Gastrocnemius medialis (tissue), 4 donors: ENCODE measurements at regions of chr14 and their contacts with region 1.

Region 1: GRCh38 chr14:69107407-69108003 is 45.4 kb downstream of the DCAF5 start:
- DNase-seq: no peak
- ATAC-seq: peak; percentile 63 to 71
- H3K4me3 ChIP-seq: no peak overlapping the region
- H3K27ac ChIP-seq: no peak overlapping the region
- H3K4me1 ChIP-seq: peaks cover 3 to 7% of the 10 kb centered on the region in 2 donors
- H3K27me3 ChIP-seq: no peaks in the 10 kb centered on the region
- CTCF ChIP-seq: peak; percentile 50 to 69 (median 65)
- POLR2A ChIP-seq: no peak

Region 2: DNA sequence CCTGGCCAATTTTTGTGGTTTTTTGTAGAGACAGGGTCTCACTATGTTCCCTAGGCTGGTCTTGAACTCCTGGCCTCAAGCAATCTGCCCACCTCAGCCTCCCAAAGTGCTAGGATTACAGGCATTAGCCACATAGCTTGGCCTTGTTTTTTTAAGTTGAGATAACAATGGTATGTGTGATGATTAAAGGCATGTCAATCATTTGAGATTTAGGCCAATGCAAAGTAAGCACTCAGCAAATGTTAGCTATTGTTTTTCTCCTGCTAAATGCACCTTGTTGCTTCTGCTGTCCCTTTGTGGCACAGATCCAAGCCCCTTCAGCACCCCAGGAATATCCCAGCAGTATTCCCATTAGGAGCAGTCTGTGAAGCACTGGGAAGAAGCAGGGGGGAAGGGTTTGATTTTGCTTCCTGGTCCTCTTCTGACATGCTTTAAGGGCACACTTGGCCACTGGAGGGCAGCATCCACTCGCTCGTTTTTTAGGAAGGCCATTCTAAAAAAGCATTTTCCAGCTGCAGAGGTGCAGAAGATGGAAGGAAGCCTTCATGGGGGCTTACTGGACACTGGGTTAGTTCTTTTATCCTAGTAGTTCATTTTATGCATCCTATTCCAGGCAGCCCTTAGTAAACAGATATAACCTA is 244.4 kb before region 1 on chr14:
- in situ Hi-C with region 1: no loop called
- intact Hi-C with region 1: loop called (anchors 5 kb)
- DNase-seq: peak; percentile 38 to 44
- ATAC-seq: peak; percentile 63 to 70
- H3K4me3 ChIP-seq: no peak overlapping the region
- H3K27ac ChIP-seq: no peak overlapping the region
- H3K4me1 ChIP-seq: no peaks in the 10 kb centered on the region
- H3K27me3 ChIP-seq: no peaks in the 10 kb centered on the region
- CTCF ChIP-seq: peak; percentile 42 to 79 (median 64)
- POLR2A ChIP-seq: no peak

Region 3: GRCh38 chr14:69068744-69069421 is 38.6 kb before region 1 on chr14:
- in situ Hi-C with region 1: no loop called
- intact Hi-C with region 1: no loop called
- DNase-seq: no peak
- ATAC-seq: no peak
- H3K4me3 ChIP-seq: no peak overlapping the region
- H3K27ac ChIP-seq: no peak overlapping the region
- H3K4me1 ChIP-seq: no peaks in the 10 kb centered on the region
- H3K27me3 ChIP-seq: no peaks in the 10 kb centered on the region
- CTCF ChIP-seq: no peak
- POLR2A ChIP-seq: no peak

Region 4: DNA sequence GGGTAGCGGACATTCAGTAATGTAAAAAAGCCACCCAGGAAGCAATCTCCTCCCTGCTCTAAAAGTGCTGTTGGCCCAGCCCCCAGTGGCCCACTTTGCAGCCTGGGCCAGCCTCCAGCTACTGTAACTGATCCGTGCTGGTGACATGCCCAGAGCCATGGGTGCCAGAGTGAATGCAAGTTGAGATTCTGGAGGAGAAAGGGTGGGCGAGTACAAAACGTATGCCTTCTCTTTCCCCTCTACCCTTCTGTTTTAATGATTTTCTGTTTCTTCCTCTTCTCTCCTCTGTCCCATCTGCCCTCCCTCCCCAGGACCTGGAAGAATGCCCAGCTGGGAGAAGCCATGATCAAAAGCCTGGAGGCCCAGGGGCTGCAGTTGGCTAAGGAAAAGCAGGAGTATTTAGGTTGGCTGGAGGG is 393.9 kb after region 1 on chr14:
- in situ Hi-C with region 1: no loop called
- intact Hi-C with region 1: no loop called
- DNase-seq: peak; percentile 57 to 79
- ATAC-seq: peak; percentile 96
- H3K4me3 ChIP-seq: no peak overlapping the region
- H3K27ac ChIP-seq: peak overlapping the region; percentile 18 to 62 (median 32)
- H3K4me1 ChIP-seq: peaks cover 27 to 28% of the 10 kb centered on the region in 2 donors
- H3K27me3 ChIP-seq: no peaks in the 10 kb centered on the region
- CTCF ChIP-seq: no peak
- POLR2A ChIP-seq: no peak

Region 5: DNA sequence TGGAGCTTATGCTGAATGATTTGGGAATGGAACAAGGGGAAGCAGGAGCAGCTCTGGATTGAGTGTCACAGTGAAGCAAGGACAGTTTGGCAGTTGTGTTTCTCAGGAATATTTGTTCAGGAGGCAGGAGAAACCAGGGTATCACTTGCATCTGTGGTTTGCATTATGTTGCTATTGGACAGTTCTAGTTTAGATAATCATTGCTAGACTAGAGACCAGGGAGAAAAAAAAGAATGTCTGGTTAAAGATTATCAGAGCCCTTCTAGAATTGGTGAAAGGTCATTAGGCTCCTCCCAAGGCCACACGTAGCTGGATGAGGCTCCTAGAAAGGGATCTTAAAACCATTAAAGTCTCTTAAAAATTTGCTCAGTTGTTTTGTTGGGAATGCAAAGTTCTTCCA is 642.5 kb after region 1 on chr14:
- in situ Hi-C with region 1: no loop called
- intact Hi-C with region 1: no loop called
- DNase-seq: no peak
- ATAC-seq: no peak
- H3K4me3 ChIP-seq: no peak overlapping the region
- H3K27ac ChIP-seq: no peak overlapping the region
- H3K4me1 ChIP-seq: no peaks in the 10 kb centered on the region
- H3K27me3 ChIP-seq: no peaks in the 10 kb centered on the region
- CTCF ChIP-seq: no peak
- POLR2A ChIP-seq: no peak